Activated naive CD4-positive, alpha-beta T cell treated with anti-CD3 and anti-CD28 coated beads for 36 hours (primary cell): ENCODE measurements at regions of chr18 and their contacts with region 1.

Region 1: GRCh38 chr18:67359873-67360838 is 156.4 kb downstream of the DSEL start:
- DNase-seq: peak; percentile 59
- H3K4me3 Mint-ChIP-seq: no peak overlapping the region
- H3K27ac Mint-ChIP-seq: no peak overlapping the region
- H3K4me1 Mint-ChIP-seq: peaks cover 16% of the 10 kb centered on the region
- H3K27me3 Mint-ChIP-seq: no peaks in the 10 kb centered on the region

Region 2: DNA sequence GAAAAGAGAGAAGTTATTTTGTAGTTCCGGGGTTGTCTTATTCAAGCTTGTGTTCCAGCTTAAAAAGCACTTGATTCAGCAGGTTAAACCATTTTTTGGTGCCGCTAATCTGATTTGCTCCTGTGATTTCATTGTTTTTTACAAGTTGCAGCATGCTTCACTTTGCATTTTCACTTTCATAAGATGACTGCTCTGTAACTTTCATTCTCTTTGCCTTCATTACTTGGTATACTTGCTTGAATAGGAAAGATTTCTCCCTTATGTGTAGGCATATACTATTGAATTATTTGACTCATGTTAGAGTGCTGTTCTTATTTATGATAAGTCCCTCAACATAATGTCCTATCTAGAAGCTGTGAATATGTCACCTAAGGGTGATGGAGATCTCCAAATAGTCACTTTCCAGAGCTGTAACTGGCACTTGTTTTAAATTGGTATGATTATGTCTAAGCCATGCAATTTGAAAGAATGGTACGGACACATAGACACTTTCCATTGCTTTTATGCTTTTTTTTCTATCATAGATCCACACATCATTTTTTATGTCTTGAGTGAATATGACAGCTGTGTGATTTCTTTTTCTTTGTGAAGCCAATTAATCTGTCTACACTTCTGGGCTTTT is 98.1 kb before region 1 on chr18:
- CTCF ChIA-PET with region 1: no interaction called
- intact Hi-C with region 1: loop called (anchors 5 kb)
- DNase-seq: no peak
- H3K4me3 Mint-ChIP-seq: no peak overlapping the region
- H3K27ac Mint-ChIP-seq: no peak overlapping the region
- H3K4me1 Mint-ChIP-seq: peaks cover 33% of the 10 kb centered on the region
- H3K27me3 Mint-ChIP-seq: no peaks in the 10 kb centered on the region

Region 3: DNA sequence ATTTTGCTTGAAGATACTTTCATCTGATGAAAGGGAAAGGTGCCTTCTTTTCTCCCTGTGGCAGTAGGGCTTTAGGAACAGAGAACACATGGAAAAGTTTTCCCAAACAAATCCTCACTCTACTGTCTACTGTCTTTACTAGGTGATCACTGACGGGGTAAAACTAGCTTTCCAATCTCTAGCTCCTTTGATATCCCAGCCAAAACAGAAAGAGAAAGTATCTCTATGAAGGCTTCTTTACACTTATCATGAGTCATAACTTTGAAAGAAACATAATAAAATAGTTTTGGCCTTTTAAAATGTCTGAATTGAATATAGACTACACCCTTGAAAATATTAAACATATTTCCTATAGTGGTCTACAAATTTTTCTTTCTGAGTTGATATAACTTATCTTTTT is 58.1 kb before region 1 on chr18:
- CTCF ChIA-PET with region 1: interaction called, 3 read pairs
- intact Hi-C with region 1: loop called (anchors 1 kb)
- DNase-seq: no peak
- H3K4me3 Mint-ChIP-seq: no peak overlapping the region
- H3K27ac Mint-ChIP-seq: peak overlapping the region; percentile 17
- H3K4me1 Mint-ChIP-seq: peaks cover 12% of the 10 kb centered on the region
- H3K27me3 Mint-ChIP-seq: no peaks in the 10 kb centered on the region

Region 4: DNA sequence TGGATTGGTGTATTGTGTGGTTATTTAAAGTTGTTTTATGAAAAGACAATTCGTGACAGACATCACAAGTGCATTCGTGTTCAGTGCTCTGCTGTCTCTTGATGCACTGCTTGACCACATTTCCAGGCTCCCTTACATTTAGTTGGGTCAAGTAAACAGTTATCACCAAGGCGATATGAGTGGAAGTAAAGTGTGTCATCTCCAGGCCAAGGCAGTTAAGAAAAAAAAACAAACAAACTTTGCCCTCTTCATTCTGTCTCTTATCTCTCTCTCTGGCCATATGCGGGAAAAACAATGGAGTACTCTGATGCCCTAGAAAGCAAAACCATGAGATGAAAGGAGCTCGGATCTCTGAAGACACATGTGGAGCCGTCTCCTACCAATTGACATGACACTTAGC is 25.3 kb after region 1 on chr18:
- CTCF ChIA-PET with region 1: interaction called, 5 read pairs
- intact Hi-C with region 1: loop called (anchors 1 kb)
- DNase-seq: no peak
- H3K4me3 Mint-ChIP-seq: no peak overlapping the region
- H3K27ac Mint-ChIP-seq: no peak overlapping the region
- H3K4me1 Mint-ChIP-seq: peaks cover 20% of the 10 kb centered on the region
- H3K27me3 Mint-ChIP-seq: peaks cover 4% of the 10 kb centered on the region

Region 5: GRCh38 chr18:67417864-67418523 is 57.8 kb after region 1 on chr18:
- CTCF ChIA-PET with region 1: no interaction called
- intact Hi-C with region 1: loop called (anchors 1 kb)
- DNase-seq: peak; percentile 19
- H3K4me3 Mint-ChIP-seq: no peak overlapping the region
- H3K27ac Mint-ChIP-seq: peak overlapping the region; percentile 9
- H3K4me1 Mint-ChIP-seq: peaks cover 9% of the 10 kb centered on the region
- H3K27me3 Mint-ChIP-seq: no peaks in the 10 kb centered on the region

Region 6: DNA sequence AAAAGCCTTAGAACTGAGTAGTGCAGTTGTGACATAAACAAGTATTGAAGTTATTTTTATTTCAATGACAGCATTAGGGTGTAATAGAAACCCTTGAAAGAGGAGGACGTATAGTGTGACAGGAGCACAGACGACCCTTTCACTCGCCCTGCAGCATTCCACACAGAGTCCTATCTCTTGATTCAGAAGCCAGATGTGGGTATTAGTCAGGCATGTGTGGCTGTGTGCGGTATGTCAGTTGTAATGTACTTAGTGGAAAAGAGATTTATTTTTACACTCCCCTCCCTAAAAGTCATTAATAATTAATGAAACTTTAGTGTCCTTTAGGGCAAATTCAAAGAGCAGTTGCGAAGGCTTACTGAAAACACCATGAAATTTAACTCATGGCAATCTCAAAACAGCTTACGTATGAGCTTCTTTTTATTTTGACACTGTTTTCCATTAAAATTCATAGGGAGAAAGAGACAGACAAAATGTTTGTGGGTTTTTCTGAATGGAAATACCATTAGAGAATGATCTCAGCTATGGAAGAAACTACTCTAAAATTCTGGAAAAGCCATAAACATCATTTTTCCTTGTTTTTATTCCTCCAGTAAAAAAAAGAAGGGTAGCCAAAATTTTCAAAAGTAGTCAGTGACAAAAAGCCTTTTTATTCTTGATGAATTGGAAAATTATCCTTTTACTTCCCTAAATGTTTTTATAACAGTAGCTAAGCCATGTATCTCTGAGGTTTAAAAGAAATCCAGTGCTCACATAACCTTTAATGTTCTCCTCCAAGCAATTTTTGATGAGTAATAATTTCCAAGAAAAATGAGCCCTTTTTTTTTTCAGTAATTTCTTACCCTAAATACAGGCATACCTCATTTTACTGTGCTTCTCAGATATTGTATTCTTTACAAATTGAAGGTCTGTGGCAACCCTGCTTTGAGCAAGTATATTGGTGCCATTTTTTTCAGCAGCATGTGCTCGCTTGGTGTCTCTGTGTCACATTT is 240.3 kb after region 1 on chr18:
- CTCF ChIA-PET with region 1: no interaction called
- intact Hi-C with region 1: no loop called
- DNase-seq: no peak
- H3K4me3 Mint-ChIP-seq: no peak overlapping the region
- H3K27ac Mint-ChIP-seq: no peak overlapping the region
- H3K4me1 Mint-ChIP-seq: no peaks in the 10 kb centered on the region
- H3K27me3 Mint-ChIP-seq: peaks cover 9% of the 10 kb centered on the region